ENCODE measurements at regions of chr6 and their contacts with region 1.

Region 1: GRCh38 chr6:39166189-39166911 is 51.4 kb upstream of the SAYSD1 start:
- DNase-seq: peak; percentile 91
- H3K4me3 ChIP-seq: no peak overlapping the region
- H3K27ac ChIP-seq: no peak overlapping the region
- H3K4me1 ChIP-seq: no peaks in the 10 kb centered on the region
- H3K27me3 ChIP-seq: no peaks in the 10 kb centered on the region
- CTCF ChIP-seq: peak; percentile 89

Region 2: GRCh38 chr6:38656896-38657295 is 509.5 kb before region 1 on chr6:
- intact Hi-C with region 1: no loop called
- DNase-seq: no peak
- H3K4me3 ChIP-seq: no peak overlapping the region
- H3K27ac ChIP-seq: no peak overlapping the region
- H3K4me1 ChIP-seq: no peaks in the 10 kb centered on the region
- H3K27me3 ChIP-seq: no peaks in the 10 kb centered on the region
- CTCF ChIP-seq: no peak

Region 3: GRCh38 chr6:38871741-38872568 is 294.4 kb before region 1 on chr6:
- intact Hi-C with region 1: loop called (anchors 10 kb)
- DNase-seq: peak; percentile 43
- H3K4me3 ChIP-seq: no peak overlapping the region
- H3K27ac ChIP-seq: no peak overlapping the region
- H3K4me1 ChIP-seq: no peaks in the 10 kb centered on the region
- H3K27me3 ChIP-seq: no peaks in the 10 kb centered on the region
- CTCF ChIP-seq: peak; percentile 88

Region 4: DNA sequence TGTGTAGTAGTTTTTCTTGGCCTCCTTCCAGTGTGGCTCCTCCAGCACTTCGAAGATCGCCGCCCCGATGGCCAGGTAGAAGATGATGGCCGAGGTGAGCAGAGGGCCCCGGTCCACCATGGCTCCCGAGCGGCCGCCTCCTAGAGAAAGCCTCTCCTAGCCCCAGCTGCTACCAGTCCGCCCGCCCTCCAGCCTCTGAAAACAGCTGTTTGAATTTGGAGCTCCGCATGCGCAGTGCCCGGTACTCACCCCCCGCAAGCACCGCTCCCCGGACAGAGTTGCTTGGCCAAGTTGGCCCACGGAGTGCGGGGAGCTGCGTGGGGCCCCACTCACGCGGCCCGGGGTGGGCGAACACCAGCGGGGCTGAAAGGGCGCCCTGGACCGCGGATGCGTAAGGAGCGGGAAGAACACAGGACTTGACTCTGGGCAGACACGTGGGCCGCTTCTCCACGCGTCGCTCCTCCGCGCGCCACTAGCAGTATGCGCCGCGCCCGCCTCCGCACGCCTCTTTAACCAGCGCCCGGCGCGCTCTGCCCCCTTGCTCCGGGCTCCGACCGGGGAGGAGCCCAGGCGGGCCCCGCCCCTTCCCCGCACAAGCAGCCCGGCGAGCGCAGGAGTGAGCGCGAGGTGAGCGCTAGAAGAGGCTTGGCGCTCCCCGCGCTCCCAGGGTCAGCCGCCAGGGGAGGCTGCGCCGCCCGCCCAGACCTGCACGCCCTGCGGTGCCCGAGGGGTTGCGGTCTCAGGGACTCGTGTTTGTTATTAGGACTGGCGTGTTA is 62.8 kb after region 1 on chr6 and contains the start of gene KCNK5:
- intact Hi-C with region 1: no loop called
- DNase-seq: peak; percentile 90
- H3K4me3 ChIP-seq: peak within 1 kb of the TSS; percentile 55
- H3K27ac ChIP-seq: peak within 1 kb of the TSS; percentile 41
- H3K4me1 ChIP-seq: no peaks in the 10 kb centered on the region
- H3K27me3 ChIP-seq: no peaks in the 10 kb centered on the region
- CTCF ChIP-seq: peak; percentile 85
- total RNA-seq, gene KCNK5: 26.9 to 39.6 TPM

Region 5: DNA sequence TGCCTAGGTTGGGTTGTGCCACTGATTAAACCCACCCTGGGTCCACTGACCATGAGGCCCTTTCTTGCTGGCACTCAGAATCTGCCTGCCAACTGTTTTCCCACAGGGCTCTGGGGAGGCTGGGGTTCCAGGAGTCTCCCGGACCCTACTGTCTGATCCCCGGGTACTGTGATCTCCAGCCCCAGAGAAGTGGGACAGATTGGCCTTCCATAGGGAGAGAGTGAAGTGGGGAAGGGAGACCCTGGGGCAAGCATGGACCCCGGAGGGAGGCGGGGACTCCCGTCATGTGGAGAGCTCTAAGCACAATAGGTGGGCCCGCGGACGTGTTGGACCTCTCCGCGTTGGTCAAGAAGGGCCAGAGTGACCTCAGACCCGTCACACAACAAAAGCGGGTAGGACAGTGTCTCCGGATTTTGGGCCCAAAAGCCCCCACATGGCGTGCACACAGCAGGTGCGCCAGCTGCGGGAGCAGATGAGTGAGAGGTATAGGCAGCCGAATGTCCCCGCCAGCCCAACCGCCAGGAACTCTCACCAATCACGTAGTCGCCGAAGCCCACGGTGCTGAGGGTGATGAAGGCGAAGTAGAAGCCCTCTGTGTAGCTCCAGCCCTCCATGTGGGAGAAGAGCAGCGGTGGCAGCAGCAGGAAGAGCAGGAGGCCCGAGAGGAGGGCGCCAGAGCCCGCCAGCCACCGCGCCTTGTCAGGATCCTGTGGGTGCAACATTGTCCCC is 137.2 kb after region 1 on chr6:
- intact Hi-C with region 1: loop called (anchors 2 kb)
- DNase-seq: no peak
- H3K4me3 ChIP-seq: no peak overlapping the region
- H3K27ac ChIP-seq: no peak overlapping the region
- H3K4me1 ChIP-seq: no peaks in the 10 kb centered on the region
- H3K27me3 ChIP-seq: no peaks in the 10 kb centered on the region
- CTCF ChIP-seq: no peak

Measured in colonic mucosa (tissue), 4 donors.